ENCODE measurements at regions of chr11 and their contacts with region 1.

Region 1: DNA sequence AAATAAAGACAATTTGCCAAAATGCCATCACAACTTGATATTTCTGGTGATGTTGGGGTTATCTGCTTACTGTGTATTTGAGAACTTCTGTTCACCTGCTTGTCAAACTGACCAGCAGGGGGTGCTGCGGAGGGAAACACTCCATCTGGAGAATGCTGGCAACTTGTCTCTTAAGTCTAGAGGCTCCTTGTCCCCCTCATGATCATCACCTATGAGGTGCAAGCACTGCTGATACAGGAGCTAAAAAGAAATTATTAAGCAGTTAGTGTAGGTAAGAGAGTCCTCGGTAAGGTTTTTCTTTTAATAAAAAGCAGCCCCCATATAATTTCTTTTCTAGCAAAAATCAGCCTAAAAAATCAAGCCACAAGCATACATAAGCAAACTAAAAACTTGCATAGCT is 32.7 kb upstream of the GLYATL1B start:
- DNase-seq: peak; percentile 49
- ATAC-seq: peak; percentile 69
- H3K4me3 ChIP-seq: no peak overlapping the region
- H3K27ac ChIP-seq: no peak overlapping the region
- H3K4me1 ChIP-seq: no peaks in the 10 kb centered on the region
- H3K27me3 ChIP-seq: no peaks in the 10 kb centered on the region; the same call in 1 of the 2 replicates
- CTCF ChIP-seq: peak; percentile 53
- POLR2A ChIP-seq: no peak
- RAD21 ChIP-seq: peak; percentile 29; the same call in 1 of the 2 replicates

Region 2: GRCh38 chr11:58762284-58763119 is 290.9 kb before region 1 on chr11:
- CTCF ChIA-PET with region 1: no interaction called
- POLR2A ChIA-PET with region 1: no interaction called
- dilution Hi-C with region 1: no loop called
- in situ Hi-C with region 1: no loop called
- intact Hi-C with region 1: no loop called
- DNase-seq: no peak
- ATAC-seq: no peak
- H3K4me3 ChIP-seq: no peak overlapping the region
- H3K27ac ChIP-seq: no peak overlapping the region
- H3K4me1 ChIP-seq: no peaks in the 10 kb centered on the region
- H3K27me3 ChIP-seq: no peaks in the 10 kb centered on the region
- CTCF ChIP-seq: no peak
- POLR2A ChIP-seq: no peak
- RAD21 ChIP-seq: no peak

Region 3: GRCh38 chr11:58845366-58845765 is 208.0 kb before region 1 on chr11:
- CTCF ChIA-PET with region 1: no interaction called
- POLR2A ChIA-PET with region 1: no interaction called
- dilution Hi-C with region 1: no loop called
- in situ Hi-C with region 1: no loop called
- intact Hi-C with region 1: loop called (anchors 1 kb)
- DNase-seq: no peak
- ATAC-seq: no peak
- H3K4me3 ChIP-seq: no peak overlapping the region
- H3K27ac ChIP-seq: no peak overlapping the region
- H3K4me1 ChIP-seq: no peaks in the 10 kb centered on the region
- H3K27me3 ChIP-seq: no peaks in the 10 kb centered on the region
- CTCF ChIP-seq: no peak
- POLR2A ChIP-seq: no peak
- RAD21 ChIP-seq: no peak